ENCODE measurements at regions of chr21 and their contacts with region 1.

Region 1: DNA sequence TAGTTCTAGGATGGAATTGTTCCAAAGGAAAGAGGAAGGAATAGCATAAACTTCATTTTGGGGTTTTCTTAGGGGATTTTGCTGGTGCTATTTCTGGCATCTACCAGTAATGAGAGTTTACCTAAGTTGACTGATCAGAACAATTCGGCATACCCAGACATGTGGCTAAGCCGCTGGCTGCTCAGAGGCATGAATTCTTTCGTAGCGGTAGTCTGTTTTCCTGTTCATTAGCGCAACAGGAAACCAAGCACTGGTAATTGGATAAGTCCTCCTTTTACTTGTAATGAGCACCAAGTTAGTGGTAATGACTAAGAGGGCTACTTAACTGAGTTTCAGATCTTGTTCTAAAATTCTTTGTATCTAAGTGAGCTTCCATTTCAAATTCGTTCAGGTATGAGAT is 38.6 kb downstream of the C21orf91 start:
- DNase-seq: peak; percentile 78
- H3K4me3 Mint-ChIP-seq: peak overlapping the region; percentile 70
- H3K27ac Mint-ChIP-seq: peak overlapping the region; percentile 75
- H3K4me1 Mint-ChIP-seq: peaks cover 83% of the 10 kb centered on the region
- H3K27me3 Mint-ChIP-seq: no peaks in the 10 kb centered on the region

Region 2: DNA sequence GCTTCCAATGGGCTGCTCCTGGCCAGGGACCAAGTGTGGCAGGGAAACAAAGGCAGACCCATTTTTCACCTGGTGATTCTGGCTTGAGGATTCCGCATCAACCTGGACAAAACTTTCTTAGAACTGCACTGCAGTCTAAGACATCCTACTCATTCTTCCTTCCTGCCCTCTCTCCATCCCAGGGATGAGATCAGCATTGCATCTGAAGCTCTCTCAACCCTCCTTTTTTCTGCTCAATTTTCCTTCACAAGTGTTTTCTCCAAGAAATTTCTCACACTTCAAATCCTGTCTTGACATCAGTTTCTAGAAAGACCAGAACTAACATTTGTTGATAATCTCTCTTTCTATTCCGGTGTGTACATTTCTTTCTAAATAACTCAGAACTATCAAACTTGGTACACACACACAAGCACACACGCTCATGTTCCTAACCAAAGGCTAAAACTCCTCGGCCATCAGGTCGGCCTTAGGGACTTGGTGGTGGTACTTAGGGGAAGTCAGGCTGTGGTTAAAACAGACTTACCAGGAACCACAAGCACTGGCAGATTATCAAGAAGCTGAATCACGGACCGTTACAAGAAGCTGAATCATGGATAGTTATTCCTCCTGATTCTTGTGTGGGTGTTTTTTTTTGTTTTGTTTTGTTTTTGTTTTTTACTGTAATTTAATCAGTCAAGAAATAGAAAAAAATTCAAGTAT is 288.7 kb before region 1 on chr21:
- intact Hi-C with region 1: loop called (anchors 2 kb)
- DNase-seq: no peak
- H3K4me3 Mint-ChIP-seq: peak overlapping the region; percentile 2
- H3K27ac Mint-ChIP-seq: no peak overlapping the region
- H3K4me1 Mint-ChIP-seq: peaks cover 18% of the 10 kb centered on the region
- H3K27me3 Mint-ChIP-seq: peaks cover 13% of the 10 kb centered on the region

Region 3: DNA sequence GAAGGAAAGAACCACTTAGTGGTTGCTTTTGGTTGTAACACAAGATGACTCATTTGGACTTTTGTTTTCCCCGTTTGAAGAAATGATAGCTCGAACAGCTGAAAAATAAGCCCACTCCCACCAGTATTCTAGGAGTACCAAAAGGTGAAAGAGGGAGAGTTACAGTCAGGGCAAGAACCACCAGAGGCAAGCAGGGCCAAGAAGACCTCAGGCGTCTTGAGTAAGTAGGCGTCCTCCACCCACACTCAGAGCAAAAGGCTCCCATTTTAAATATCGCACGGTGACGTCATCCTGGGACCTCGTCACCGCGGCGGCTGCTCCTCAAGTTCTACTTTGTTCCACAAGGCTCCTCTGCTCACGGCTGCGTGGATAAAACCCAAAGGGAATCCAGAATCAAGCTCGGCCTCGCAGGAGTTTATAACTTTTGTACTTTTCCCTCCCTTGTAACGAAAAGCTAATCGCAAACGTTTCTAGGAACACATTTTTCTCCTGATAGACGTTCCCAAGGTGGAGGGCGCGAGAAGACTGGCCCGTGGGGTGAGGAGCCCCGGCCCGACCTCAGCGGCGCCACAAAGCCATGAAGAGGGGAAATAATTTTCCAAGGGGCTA is 169.0 kb before region 1 on chr21:
- intact Hi-C with region 1: loop called (anchors 1 kb)
- DNase-seq: peak; percentile 94
- H3K4me3 Mint-ChIP-seq: peak overlapping the region; percentile 84
- H3K27ac Mint-ChIP-seq: peak overlapping the region; percentile 96
- H3K4me1 Mint-ChIP-seq: peaks cover 46% of the 10 kb centered on the region
- H3K27me3 Mint-ChIP-seq: no peaks in the 10 kb centered on the region

Region 4: GRCh38 chr21:17793246-17794123 is 12.9 kb after region 1 on chr21:
- intact Hi-C with region 1: loop called (anchors 1 kb)
- DNase-seq: peak; percentile 68
- H3K4me3 Mint-ChIP-seq: peak overlapping the region; percentile 79
- H3K27ac Mint-ChIP-seq: peak overlapping the region; percentile 73
- H3K4me1 Mint-ChIP-seq: peaks cover 53% of the 10 kb centered on the region
- H3K27me3 Mint-ChIP-seq: no peaks in the 10 kb centered on the region

Region 5: GRCh38 chr21:17903029-17903806 is 122.7 kb after region 1 on chr21:
- intact Hi-C with region 1: loop called (anchors 5 kb)
- DNase-seq: no peak
- H3K4me3 Mint-ChIP-seq: no peak overlapping the region
- H3K27ac Mint-ChIP-seq: no peak overlapping the region
- H3K4me1 Mint-ChIP-seq: peaks cover 13% of the 10 kb centered on the region
- H3K27me3 Mint-ChIP-seq: peaks cover 3% of the 10 kb centered on the region

Region 6: GRCh38 chr21:17949421-17949820 is 168.9 kb after region 1 on chr21:
- intact Hi-C with region 1: no loop called
- DNase-seq: no peak
- H3K4me3 Mint-ChIP-seq: no peak overlapping the region
- H3K27ac Mint-ChIP-seq: no peak overlapping the region
- H3K4me1 Mint-ChIP-seq: no peaks in the 10 kb centered on the region
- H3K27me3 Mint-ChIP-seq: no peaks in the 10 kb centered on the region